Naive thymus-derived CD4-positive, alpha-beta T cell (primary cell): ENCODE measurements at regions of chr14 and their contacts with region 1.

Region 1: DNA sequence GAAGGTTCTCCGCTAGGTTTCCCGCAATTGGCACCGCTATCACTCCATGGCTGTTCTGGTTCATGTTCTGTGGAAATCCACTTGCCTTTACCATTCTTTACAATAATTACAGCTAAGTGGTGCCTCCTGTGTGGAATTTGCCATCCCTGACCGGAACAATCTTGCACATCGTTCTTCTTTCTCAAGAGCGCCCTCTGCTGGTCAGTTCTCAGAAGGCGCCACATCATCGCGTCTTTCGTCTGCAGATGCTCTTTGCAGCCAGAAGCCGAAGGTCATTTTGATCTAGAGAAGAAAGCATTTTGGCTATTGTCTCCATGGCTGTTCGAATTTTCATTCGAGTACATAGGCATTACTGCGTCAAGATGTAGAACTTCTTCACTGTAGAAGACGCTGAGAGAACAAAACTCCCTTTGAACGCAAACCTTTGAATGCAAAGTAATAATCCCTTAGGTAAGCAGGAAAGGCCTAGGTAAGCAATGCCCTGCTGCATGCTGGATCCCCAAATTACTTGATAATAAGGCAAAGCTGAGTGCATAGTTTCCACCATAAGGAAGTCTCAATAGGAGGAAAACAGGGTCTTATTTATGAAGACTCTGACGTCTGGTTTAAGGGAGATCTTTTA is 10.1 kb upstream of the RTRAF start:
- DNase-seq: peak; percentile 53 to 80 (median 70)
- ATAC-seq: peak; percentile 91
- H3K4me3 ChIP-seq: no peak overlapping the region
- H3K4me3 Mint-ChIP-seq: no peak overlapping the region
- H3K27ac ChIP-seq: no peak overlapping the region
- H3K27ac Mint-ChIP-seq: peak overlapping the region in 3 of 9 donors; percentile 15 to 67 (median 20)
- H3K4me1 ChIP-seq: peaks cover 0 to 10% of the 10 kb centered on the region in 2 donors
- H3K4me1 Mint-ChIP-seq: peaks cover 0 to 18% (median 6%) of the 10 kb centered on the region in 7 donors
- H3K27me3 ChIP-seq: no peaks in the 10 kb centered on the region
- H3K27me3 Mint-ChIP-seq: peaks cover 0 to 5% (median 0%) of the 10 kb centered on the region in 5 donors

Region 2: DNA sequence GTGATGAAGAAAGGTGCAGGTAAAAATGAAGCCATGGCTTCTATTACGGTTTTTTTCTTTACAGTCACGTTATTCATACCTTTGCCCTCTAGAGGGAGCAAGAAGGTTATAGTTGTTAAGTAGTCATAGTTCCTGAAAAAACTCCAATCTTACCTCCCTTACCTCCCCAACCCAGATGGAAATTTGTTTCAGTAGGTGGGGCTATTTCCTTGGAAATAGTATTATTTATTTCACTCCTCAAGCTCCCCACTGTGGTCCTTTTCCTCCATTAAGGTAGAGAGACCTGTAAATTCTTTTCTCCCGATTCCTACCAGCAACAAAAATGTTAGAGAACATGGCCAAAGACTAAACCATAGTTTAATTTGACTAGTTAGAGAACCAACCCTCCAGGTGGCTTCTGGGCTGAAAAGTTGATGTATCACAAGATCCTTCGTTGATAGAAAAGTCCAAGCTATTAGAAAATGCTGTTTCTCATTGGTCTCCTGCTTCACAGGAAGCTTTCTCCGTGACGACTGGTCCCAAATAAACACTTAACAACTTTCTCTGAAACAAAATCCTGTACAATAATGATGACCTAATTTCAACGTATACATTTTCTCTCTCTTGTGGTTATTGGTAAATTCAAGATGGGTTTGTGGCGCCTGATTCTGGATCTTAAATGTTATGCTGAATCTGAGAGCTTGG is 695.7 kb before region 1 on chr14:
- CTCF ChIA-PET with region 1: interaction called, 3 read pairs
- POLR2A ChIA-PET with region 1: no interaction called
- intact Hi-C with region 1: loop called (anchors 1 to 5 kb)
- DNase-seq: peak in 5 of 9 donors; percentile 25 to 47 (median 32)
- ATAC-seq: peak; percentile 73
- H3K4me3 ChIP-seq: no peak overlapping the region
- H3K4me3 Mint-ChIP-seq: no peak overlapping the region
- H3K27ac ChIP-seq: no peak overlapping the region
- H3K27ac Mint-ChIP-seq: no peak overlapping the region
- H3K4me1 ChIP-seq: no peaks in the 10 kb centered on the region
- H3K4me1 Mint-ChIP-seq: peaks cover 0 to 2% (median 0%) of the 10 kb centered on the region in 7 donors
- H3K27me3 ChIP-seq: no peaks in the 10 kb centered on the region
- H3K27me3 Mint-ChIP-seq: no peaks in the 10 kb centered on the region

Region 3: DNA sequence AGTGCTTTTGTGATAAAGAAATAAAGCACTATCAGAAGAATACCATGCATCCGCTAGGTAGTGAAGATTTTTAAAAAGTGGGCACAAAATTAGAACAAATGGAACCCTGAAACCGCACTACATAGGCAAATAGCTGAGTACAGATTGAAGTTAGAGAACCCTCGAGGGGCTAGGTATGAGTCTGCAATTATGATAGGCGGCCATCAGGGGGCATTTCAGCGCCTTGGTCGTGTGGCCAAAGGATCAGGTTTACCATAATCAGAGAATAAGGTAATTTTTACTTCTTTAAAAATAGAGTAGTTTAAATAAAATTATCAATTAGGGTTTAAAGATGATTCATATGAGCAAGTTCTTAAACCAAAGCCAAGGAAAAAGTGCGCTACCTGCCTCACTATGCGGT is 609.4 kb before region 1 on chr14:
- CTCF ChIA-PET with region 1: no interaction called
- POLR2A ChIA-PET with region 1: no interaction called
- intact Hi-C with region 1: loop called in 1 of 2 experiments (anchors 1 kb)
- DNase-seq: peak in 4 of 9 donors; percentile 1 to 14 (median 8)
- ATAC-seq: no peak
- H3K4me3 ChIP-seq: no peak overlapping the region
- H3K4me3 Mint-ChIP-seq: no peak overlapping the region
- H3K27ac ChIP-seq: no peak overlapping the region
- H3K27ac Mint-ChIP-seq: no peak overlapping the region
- H3K4me1 ChIP-seq: no peaks in the 10 kb centered on the region
- H3K4me1 Mint-ChIP-seq: no peaks in the 10 kb centered on the region
- H3K27me3 ChIP-seq: no peaks in the 10 kb centered on the region
- H3K27me3 Mint-ChIP-seq: peaks cover 4 to 14% (median 9%) of the 10 kb centered on the region in 5 donors

Region 4: DNA sequence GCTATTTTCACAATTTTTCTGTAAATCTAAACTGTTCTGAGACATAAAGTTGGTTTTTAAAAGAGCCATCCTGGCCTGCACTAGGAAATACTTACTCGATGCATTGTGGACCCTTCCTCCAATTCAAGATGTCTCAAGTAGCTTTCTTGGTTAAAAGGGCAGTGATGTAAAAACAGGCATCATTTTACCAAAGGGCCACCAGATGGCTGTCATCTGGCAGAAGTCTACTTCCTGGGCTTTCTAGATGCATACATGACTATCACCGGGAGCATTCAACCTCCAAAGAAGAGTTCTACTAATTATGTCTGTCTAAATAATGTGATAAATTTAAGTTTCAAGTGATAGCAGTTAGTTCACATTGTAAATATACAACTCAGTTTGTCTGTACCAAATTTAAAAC is 424.2 kb before region 1 on chr14:
- CTCF ChIA-PET with region 1: no interaction called
- POLR2A ChIA-PET with region 1: no interaction called
- intact Hi-C with region 1: loop called in 1 of 2 experiments (anchors 2 kb)
- DNase-seq: no peak
- ATAC-seq: no peak
- H3K4me3 ChIP-seq: no peak overlapping the region
- H3K4me3 Mint-ChIP-seq: no peak overlapping the region
- H3K27ac ChIP-seq: no peak overlapping the region
- H3K27ac Mint-ChIP-seq: no peak overlapping the region
- H3K4me1 ChIP-seq: no peaks in the 10 kb centered on the region
- H3K4me1 Mint-ChIP-seq: no peaks in the 10 kb centered on the region
- H3K27me3 ChIP-seq: no peaks in the 10 kb centered on the region
- H3K27me3 Mint-ChIP-seq: peaks cover 11 to 24% (median 12%) of the 10 kb centered on the region in 5 donors

Region 5: DNA sequence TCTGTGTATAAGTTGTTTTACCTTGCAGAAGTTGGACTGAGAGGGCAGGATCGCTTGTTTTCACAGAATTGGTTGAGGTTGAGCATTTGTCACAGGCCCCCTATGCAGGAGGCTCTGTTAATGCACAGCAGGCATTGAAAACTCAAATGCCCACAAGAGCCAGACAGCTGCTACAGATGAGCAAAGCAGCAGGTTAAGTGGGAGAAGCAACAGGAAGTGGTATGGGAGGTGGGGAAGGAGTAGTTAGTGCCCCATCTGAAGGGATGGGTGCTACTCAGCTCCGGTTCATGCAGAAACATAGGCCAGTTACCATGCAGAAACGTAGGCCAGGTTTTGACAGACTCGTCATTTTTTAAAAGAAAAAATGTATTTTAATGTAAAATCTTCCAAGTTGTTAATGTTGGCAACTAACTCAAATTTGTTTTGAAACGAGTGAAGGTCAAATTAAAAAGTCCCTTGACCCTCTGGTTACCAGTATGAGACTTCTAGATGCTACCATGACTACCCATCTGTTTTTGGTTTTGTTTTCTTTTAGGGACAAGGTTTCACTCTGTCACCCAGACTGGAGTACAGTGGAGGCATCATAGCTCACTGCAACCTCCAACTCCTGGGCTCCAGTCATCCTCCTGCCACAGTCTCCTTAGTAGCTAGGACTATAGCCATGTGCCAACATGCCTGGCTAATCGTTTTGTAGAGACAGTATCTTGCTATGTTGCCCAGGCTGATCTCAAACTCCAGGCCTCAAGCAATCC is 412.2 kb before region 1 on chr14:
- CTCF ChIA-PET with region 1: no interaction called
- POLR2A ChIA-PET with region 1: no interaction called
- intact Hi-C with region 1: no loop called
- DNase-seq: peak in 6 of 9 donors; percentile 8 to 36 (median 12)
- ATAC-seq: peak; percentile 32
- H3K4me3 ChIP-seq: no peak overlapping the region
- H3K4me3 Mint-ChIP-seq: peak overlapping the region in 5 of 10 donors; percentile 29 to 58 (median 47)
- H3K27ac ChIP-seq: no peak overlapping the region
- H3K27ac Mint-ChIP-seq: peak overlapping the region in 5 of 9 donors; percentile 11 to 80 (median 31)
- H3K4me1 ChIP-seq: peaks cover 6% of the 10 kb centered on the region in 2 donors
- H3K4me1 Mint-ChIP-seq: peaks cover 7 to 30% (median 23%) of the 10 kb centered on the region in 7 donors
- H3K27me3 ChIP-seq: no peaks in the 10 kb centered on the region
- H3K27me3 Mint-ChIP-seq: peaks cover 0 to 7% (median 2%) of the 10 kb centered on the region in 5 donors

Region 6: DNA sequence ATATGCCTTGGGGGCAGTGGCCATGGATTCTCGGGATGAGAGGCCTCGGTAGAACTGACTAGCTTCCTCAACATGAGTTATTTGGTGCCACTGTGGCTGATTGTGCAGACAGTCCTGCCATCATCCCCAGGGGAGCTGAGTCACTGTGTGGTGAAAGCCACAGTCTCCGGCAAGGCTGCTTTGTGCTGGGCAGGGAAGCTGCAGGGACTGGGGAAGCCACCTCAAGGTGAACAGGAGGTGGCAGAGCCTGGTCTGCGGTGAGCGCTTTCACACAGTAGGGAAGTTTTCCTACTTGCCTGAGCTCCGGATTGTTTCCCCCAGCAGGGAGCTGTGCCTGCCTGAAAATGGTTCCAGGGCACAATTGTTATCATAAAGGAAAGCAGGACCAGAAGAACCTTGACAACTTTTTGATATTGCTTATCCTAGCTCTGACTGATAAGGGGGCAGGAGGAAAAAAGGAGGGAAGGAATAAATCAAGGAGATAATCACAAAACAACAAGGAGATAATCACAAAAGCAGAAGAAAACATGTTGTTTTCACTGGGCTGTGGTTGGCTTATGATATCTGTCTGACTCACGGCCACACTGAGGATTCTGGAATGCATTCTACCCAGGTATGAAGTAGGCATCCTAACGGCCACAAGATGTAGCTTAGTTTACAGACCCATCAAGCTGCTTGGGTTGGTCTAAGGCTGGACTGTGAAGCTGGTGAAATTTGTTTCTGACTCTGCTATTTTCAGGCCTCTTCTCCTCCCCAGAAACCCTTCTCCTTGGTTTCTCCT is 151.0 kb before region 1 on chr14:
- CTCF ChIA-PET with region 1: interaction called, 8 read pairs
- POLR2A ChIA-PET with region 1: no interaction called
- intact Hi-C with region 1: loop called (anchors 5 kb)
- DNase-seq: peak in 5 of 9 donors; percentile 16 to 68 (median 28)
- ATAC-seq: peak; percentile 97
- H3K4me3 ChIP-seq: no peak overlapping the region
- H3K4me3 Mint-ChIP-seq: no peak overlapping the region
- H3K27ac ChIP-seq: no peak overlapping the region
- H3K27ac Mint-ChIP-seq: peak overlapping the region in 1 of 9 donors; percentile 2
- H3K4me1 ChIP-seq: peaks cover 4 to 6% of the 10 kb centered on the region in 2 donors
- H3K4me1 Mint-ChIP-seq: peaks cover 0 to 4% (median 0%) of the 10 kb centered on the region in 7 donors
- H3K27me3 ChIP-seq: no peaks in the 10 kb centered on the region
- H3K27me3 Mint-ChIP-seq: no peaks in the 10 kb centered on the region

Region 7: GRCh38 chr14:51945710-51946109 is 33.5 kb before region 1 on chr14:
- CTCF ChIA-PET with region 1: no interaction called
- POLR2A ChIA-PET with region 1: no interaction called
- intact Hi-C with region 1: no loop called
- DNase-seq: no peak
- ATAC-seq: no peak
- H3K4me3 ChIP-seq: no peak overlapping the region
- H3K4me3 Mint-ChIP-seq: no peak overlapping the region
- H3K27ac ChIP-seq: no peak overlapping the region
- H3K27ac Mint-ChIP-seq: peak overlapping the region in 5 of 9 donors; percentile 1 to 73 (median 33)
- H3K4me1 ChIP-seq: no peaks in the 10 kb centered on the region
- H3K4me1 Mint-ChIP-seq: peaks cover 15 to 43% (median 28%) of the 10 kb centered on the region in 7 donors
- H3K27me3 ChIP-seq: no peaks in the 10 kb centered on the region
- H3K27me3 Mint-ChIP-seq: no peaks in the 10 kb centered on the region

Region 8: DNA sequence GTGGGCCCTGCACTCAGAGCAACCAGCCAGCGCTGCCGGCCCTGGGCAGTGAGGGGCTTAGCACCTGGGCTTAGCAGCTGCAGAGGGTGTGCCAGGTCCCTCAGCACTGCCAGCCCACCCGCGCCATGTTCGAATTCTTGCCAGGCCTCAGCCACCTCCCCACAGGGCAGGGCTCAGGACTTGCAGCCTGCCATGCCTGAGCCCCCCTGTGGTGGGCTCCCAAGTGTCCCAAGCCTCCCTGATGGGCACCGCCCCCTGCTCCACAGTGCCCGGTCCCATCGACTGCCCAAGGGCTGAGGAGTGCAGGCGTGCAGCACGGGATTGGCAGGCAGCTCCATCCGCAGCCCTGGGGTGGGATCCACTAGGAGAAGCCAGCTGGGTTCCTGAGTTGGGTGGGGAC is 187.6 kb after region 1 on chr14:
- CTCF ChIA-PET with region 1: no interaction called
- POLR2A ChIA-PET with region 1: no interaction called
- intact Hi-C with region 1: no loop called
- DNase-seq: no peak
- ATAC-seq: no peak
- H3K4me3 ChIP-seq: no peak overlapping the region
- H3K4me3 Mint-ChIP-seq: no peak overlapping the region
- H3K27ac ChIP-seq: no peak overlapping the region
- H3K27ac Mint-ChIP-seq: no peak overlapping the region
- H3K4me1 ChIP-seq: no peaks in the 10 kb centered on the region
- H3K4me1 Mint-ChIP-seq: peaks cover 0 to 1% (median 0%) of the 10 kb centered on the region in 7 donors
- H3K27me3 ChIP-seq: no peaks in the 10 kb centered on the region
- H3K27me3 Mint-ChIP-seq: peaks cover 0 to 10% (median 0%) of the 10 kb centered on the region in 5 donors